Activated CD4-positive, alpha-beta T cell treated with anti-CD3 and anti-CD28 coated beads for 36 hours (primary cell): ENCODE measurements at regions of chr22 and their contacts with region 1.

Region 1: DNA sequence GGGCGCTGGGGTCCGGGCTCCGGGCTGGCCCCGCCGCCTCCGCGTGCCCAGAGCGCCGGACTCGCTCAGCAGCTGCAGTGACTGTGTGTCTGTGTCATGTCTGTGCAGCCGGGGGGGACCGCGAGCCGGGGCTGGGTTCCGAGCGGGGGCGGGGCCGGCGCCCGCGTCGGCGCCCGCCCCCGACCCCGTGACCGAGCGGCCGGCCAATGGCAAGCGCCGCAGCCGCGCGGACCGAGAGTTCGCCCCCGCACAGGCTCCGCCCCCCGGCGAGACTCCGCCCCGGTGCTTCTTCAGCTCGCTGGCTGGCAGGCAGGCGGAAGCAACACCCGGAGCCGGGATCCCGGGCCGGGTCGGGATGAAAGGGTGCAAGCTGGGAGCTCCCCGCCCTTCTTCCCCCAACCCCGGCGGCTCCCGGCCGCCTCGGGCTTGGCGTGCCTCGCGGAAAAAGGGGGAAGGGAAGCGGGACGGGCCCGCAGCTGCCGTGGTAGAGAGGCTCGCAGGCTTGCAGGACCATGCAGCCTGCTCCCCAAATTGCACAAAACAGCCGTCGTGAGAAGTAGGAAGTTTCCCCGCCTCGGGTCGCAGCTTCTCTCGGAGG is 750 bp upstream of the LARGE1 start:
- DNase-seq: peak; percentile 95
- ATAC-seq: peak; percentile 97
- H3K4me3 Mint-ChIP-seq: peak overlapping the region; percentile 60
- H3K27ac Mint-ChIP-seq: no peak overlapping the region
- H3K4me1 Mint-ChIP-seq: peaks cover 16% of the 10 kb centered on the region
- H3K27me3 Mint-ChIP-seq: peaks cover 68% of the 10 kb centered on the region

Region 2: GRCh38 chr22:35023692-35024363 is 1102.8 kb after region 1 on chr22:
- CTCF ChIA-PET with region 1: no interaction called
- POLR2A ChIA-PET with region 1: no interaction called
- intact Hi-C with region 1: loop called in 1 of 2 experiments (anchors 5 kb)
- DNase-seq: peak; percentile 87
- ATAC-seq: no peak
- H3K4me3 Mint-ChIP-seq: no peak overlapping the region
- H3K27ac Mint-ChIP-seq: no peak overlapping the region
- H3K4me1 Mint-ChIP-seq: no peaks in the 10 kb centered on the region
- H3K27me3 Mint-ChIP-seq: peaks cover 25% of the 10 kb centered on the region